ENCODE measurements at regions of chr18 and their contacts with region 1.

Region 1: GRCh38 chr18:49178736-49179135 is 228.0 kb upstream of the SMAD7 start:
- DNase-seq: peak in 2 of 35 experiments; percentile 14 to 34
- ATAC-seq: no peak
- H3K4me3 ChIP-seq: no peak overlapping the region
- H3K4me3 Mint-ChIP-seq: no peak overlapping the region
- H3K27ac ChIP-seq: no peak overlapping the region
- H3K27ac Mint-ChIP-seq: no peak overlapping the region
- H3K4me1 ChIP-seq: peaks cover 0 to 2% of the 10 kb centered on the region in 2 experiments
- H3K4me1 Mint-ChIP-seq: peaks cover 8 to 21% (median 17%) of the 10 kb centered on the region in 3 donors
- H3K27me3 ChIP-seq: no peaks in the 10 kb centered on the region
- H3K27me3 Mint-ChIP-seq: no peaks in the 10 kb centered on the region

Region 2: DNA sequence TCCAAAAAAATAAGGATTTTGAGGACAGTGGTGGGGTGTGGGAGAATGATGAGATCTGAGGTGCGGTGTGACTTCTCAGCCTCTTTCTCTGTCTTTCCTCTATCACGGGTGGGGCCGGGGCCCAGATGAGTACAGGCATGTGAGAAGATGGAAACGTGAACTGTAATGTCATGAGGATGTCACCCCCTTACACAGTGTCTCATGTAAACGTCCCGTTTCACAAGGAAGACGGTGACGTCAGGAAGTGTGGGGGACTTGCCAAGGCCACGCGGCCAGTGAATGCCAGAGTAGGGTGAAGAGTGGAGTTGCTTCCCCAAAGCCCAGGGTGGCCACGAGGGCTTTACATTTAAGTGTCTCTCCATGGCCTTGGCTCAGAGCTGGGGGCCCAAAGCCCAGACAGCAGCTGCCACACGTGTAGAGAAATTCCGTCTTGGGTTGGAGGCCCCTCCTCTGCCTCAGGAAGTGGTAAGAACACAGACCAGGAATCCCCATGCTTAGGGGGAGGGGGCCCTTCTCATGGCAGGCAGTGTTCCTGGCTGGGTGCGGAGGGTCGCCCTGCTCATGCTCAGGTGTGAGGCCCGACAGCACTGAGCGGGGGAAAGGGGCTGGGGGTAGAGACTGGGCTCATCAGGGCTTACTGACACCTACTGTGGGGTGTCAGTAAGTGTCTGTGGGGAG is 147.1 kb before region 1 on chr18:
- CTCF ChIA-PET with region 1: interaction called in 1 of 2 experiments, 10 read pairs
- POLR2A ChIA-PET with region 1: no interaction called
- DNase-seq: peak in 28 of 35 experiments; percentile 8 to 63 (median 25)
- ATAC-seq: peak; percentile 54 to 81 (median 60)
- H3K4me3 ChIP-seq: peak overlapping the region; percentile 6 to 39
- H3K4me3 Mint-ChIP-seq: peak overlapping the region in 2 of 3 donors; percentile 49 to 55
- H3K27ac ChIP-seq: no peak overlapping the region
- H3K27ac Mint-ChIP-seq: no peak overlapping the region
- H3K4me1 ChIP-seq: peaks cover 3 to 11% of the 10 kb centered on the region in 2 experiments
- H3K4me1 Mint-ChIP-seq: peaks cover 16 to 19% (median 19%) of the 10 kb centered on the region in 3 donors
- H3K27me3 ChIP-seq: peaks cover 0 to 20% of the 10 kb centered on the region in 2 experiments
- H3K27me3 Mint-ChIP-seq: no peaks in the 10 kb centered on the region

Region 3: DNA sequence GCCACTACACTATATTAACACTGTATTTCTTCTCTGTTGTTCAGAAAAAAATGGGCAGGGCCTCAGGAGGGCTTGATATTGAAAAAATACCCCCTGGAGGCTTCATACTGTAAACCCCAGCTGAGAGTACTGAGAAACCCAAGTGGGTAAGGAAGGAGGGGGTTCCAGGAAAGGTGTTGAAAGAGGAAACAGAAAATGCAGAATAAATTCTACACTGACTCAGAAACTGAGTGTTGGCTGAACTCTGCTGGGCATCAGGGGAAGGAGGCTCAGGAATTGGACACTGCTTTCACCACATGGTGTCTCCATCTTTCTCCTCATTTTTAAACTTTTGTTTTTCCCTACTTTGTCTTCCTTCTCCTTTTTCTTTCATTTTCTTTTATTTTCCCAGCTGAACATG is 28.0 kb after region 1 on chr18:
- CTCF ChIA-PET with region 1: no interaction called
- POLR2A ChIA-PET with region 1: no interaction called
- DNase-seq: no peak
- ATAC-seq: no peak
- H3K4me3 ChIP-seq: no peak overlapping the region
- H3K4me3 Mint-ChIP-seq: no peak overlapping the region
- H3K27ac ChIP-seq: no peak overlapping the region
- H3K27ac Mint-ChIP-seq: no peak overlapping the region
- H3K4me1 ChIP-seq: peaks cover 0 to 5% of the 10 kb centered on the region in 2 experiments
- H3K4me1 Mint-ChIP-seq: peaks cover 9 to 39% (median 14%) of the 10 kb centered on the region in 3 donors
- H3K27me3 ChIP-seq: no peaks in the 10 kb centered on the region
- H3K27me3 Mint-ChIP-seq: no peaks in the 10 kb centered on the region

Measured in T-cell (primary cell).